Common myeloid progenitor, CD34-positive (primary cell): ENCODE measurements at regions of chr5 and their contacts with region 1.

Region 1: GRCh38 chr5:141512390-141512910 is 23.6 kb downstream of the PCDHGC5 start:
- DNase-seq: peak; percentile 81 to 83 (median 82)
- H3K4me3 ChIP-seq: peak overlapping the region in 6 of 7 experiments; percentile 51 to 93 (median 70)
- H3K27ac ChIP-seq: no peak overlapping the region
- H3K4me1 ChIP-seq: peaks cover 18 to 47% (median 44%) of the 10 kb centered on the region in 4 experiments
- H3K27me3 ChIP-seq: no peaks in the 10 kb centered on the region

Region 2: DNA sequence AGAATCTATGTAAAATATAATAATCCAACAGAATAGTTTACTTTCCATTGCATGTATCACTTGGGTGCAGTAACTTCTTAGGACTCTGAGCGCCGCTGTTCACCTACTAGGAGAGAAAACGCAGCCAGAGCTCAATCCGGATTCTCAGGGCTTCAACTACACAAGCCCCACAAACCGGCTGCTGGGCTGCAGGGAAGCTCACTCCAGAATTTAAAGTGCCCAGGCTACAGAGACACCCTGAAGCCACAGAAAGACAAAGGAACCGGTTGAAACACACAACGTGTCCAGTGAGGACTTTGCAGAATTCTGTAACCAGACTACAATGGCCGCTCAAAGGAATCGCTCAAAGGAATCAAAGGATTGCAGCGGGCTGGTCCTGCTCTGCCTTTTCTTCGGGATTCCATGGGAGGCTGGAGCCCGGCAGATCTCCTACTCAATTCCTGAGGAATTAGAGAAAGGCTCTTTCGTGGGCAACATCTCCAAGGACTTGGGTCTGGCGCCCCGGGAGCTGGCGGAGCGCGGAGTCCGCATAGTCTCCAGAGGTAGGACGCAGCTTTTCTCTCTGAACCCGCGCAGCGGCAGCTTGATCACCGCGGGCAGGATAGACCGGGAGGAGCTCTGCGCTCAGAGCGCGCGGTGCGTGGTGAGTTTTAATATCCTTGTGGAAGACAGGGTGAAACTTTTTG is 99.5 kb before region 1 on chr5 and contains the start of gene PCDHGA10:
- CTCF ChIA-PET with region 1: interaction called, 25 read pairs
- POLR2A ChIA-PET with region 1: no interaction called
- DNase-seq: peak; percentile 64 to 87 (median 87)
- H3K4me3 ChIP-seq: peak within 1 kb of the TSS; percentile 27 to 84 (median 68)
- H3K27ac ChIP-seq: no peak within 1 kb of the TSS
- H3K4me1 ChIP-seq: peaks cover 0 to 15% (median 10%) of the 10 kb centered on the region in 4 experiments
- H3K27me3 ChIP-seq: peaks cover 24 to 85% (median 38%) of the 10 kb centered on the region in 5 experiments

Region 3: GRCh38 chr5:141420855-141421496 is 91.5 kb before region 1 on chr5 and contains the start of gene PCDHGA11:
- CTCF ChIA-PET with region 1: interaction called, 25 read pairs
- POLR2A ChIA-PET with region 1: no interaction called
- DNase-seq: peak; percentile 75 to 81 (median 80)
- H3K4me3 ChIP-seq: peak within 1 kb of the TSS; percentile 36 to 81 (median 63)
- H3K27ac ChIP-seq: no peak within 1 kb of the TSS
- H3K4me1 ChIP-seq: peaks cover 0 to 18% (median 9%) of the 10 kb centered on the region in 4 experiments
- H3K27me3 ChIP-seq: peaks cover 30 to 89% (median 37%) of the 10 kb centered on the region in 5 experiments

Region 4: GRCh38 chr5:141430332-141431113 is 81.9 kb before region 1 on chr5 and contains the start of gene PCDHGA12:
- CTCF ChIA-PET with region 1: interaction called, 29 read pairs
- POLR2A ChIA-PET with region 1: interaction called, 3 read pairs
- DNase-seq: peak; percentile 82 to 88 (median 86)
- H3K4me3 ChIP-seq: peak within 1 kb of the TSS in 6 of 7 experiments; percentile 21 to 56 (median 48)
- H3K27ac ChIP-seq: no peak within 1 kb of the TSS
- H3K4me1 ChIP-seq: peaks cover 2 to 6% (median 5%) of the 10 kb centered on the region in 4 experiments
- H3K27me3 ChIP-seq: peaks cover 8 to 58% (median 25%) of the 10 kb centered on the region in 5 experiments

Region 5: DNA sequence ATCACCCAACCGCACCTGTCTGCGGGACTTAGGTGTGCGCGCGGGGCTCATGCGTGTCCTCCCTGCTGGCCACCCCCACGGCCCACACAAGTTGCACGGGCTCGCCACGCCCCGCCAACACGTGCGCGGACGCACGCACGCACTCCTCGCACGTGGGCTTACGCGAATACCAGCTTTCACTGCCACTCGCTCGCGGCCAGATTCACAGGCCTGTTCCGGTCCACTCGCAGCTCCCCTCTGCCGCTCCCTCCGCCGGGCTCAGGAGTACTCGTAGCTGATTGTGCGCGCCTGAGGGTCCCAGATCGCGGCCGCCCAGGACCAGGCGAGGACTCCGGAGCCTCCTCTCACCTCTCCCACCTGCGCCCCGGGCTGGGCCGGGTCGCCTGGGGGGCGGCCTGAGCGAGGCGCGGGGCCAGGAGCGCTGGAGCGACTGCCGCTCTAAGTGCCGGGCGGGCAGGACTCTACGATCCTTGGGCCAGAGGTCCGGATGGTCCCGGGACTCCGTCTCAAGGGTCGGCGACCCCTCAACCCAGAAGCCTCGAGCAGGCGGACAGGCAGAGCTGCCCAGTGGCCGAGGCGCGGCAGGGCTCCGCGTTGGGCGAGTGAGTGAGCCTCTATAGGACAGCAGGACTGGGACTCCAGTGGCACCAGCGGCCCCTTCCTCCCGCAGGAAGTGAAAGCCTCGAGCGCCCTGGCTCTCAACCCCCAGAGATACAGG is 20.1 kb before region 1 on chr5:
- CTCF ChIA-PET with region 1: interaction called, 20 read pairs
- POLR2A ChIA-PET with region 1: no interaction called
- DNase-seq: peak in 2 of 3 donors; percentile 55 to 69
- H3K4me3 ChIP-seq: peak overlapping the region in 5 of 7 experiments; percentile 16 to 62 (median 58)
- H3K27ac ChIP-seq: no peak overlapping the region
- H3K4me1 ChIP-seq: peaks cover 0 to 23% (median 13%) of the 10 kb centered on the region in 4 experiments
- H3K27me3 ChIP-seq: peaks cover 7 to 90% (median 55%) of the 10 kb centered on the region in 5 experiments

Region 6: GRCh38 chr5:141778206-141778605 is 265.8 kb after region 1 on chr5:
- CTCF ChIA-PET with region 1: no interaction called
- POLR2A ChIA-PET with region 1: no interaction called
- DNase-seq: no peak
- H3K4me3 ChIP-seq: no peak overlapping the region
- H3K27ac ChIP-seq: no peak overlapping the region
- H3K4me1 ChIP-seq: peaks cover 0 to 5% (median under 1%) of the 10 kb centered on the region in 4 experiments
- H3K27me3 ChIP-seq: peaks cover 0 to 17% (median 4%) of the 10 kb centered on the region in 5 experiments